Activated CD4-positive, alpha-beta memory T cell treated with anti-CD3 and anti-CD28 coated beads, Interleukin-2, amount 10 ng/mL, durations not matched to agents 7 days and 5 days (primary cell): ENCODE measurements at regions of chr4 and their contacts with region 1.

Region 1: DNA sequence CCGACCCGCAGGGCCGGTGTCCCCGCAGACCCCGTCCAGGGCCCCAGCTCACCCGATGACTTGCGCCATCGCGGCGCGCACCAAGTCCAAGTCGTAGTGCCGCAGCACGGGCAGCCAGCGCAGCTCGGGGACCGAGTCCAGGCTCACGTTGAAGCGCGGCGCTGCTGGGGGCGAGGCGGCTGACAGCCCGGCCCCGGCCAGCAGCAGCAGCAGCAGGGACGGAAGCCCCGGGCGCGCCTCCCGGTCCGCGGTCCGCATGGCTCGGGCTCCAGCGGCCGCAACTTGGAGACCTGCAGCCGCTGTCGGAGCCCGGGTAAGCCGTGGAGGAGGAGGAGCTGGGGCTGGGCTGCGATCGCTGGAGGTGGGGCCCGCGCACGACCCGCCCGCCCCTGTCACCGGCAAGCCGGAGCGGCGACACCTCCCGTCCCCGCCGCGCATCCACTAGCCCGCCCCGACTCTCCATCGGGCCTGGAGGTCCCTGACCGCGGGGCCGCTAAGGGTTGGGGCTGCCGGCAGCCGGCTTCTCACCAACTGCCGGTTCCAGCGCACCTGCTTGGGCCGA is at the start of gene NAAA:
- DNase-seq: peak; percentile 88
- H3K4me3 Mint-ChIP-seq: peak within 1 kb of the TSS; percentile 99
- H3K27ac Mint-ChIP-seq: peak within 1 kb of the TSS; percentile 94
- H3K4me1 Mint-ChIP-seq: peaks cover 32% of the 10 kb centered on the region
- H3K27me3 Mint-ChIP-seq: no peaks in the 10 kb centered on the region
- total RNA-seq, gene NAAA: 38.7 to 39.3 TPM

Region 2: GRCh38 chr4:75841641-75842520 is 98.9 kb before region 1 on chr4:
- CTCF ChIA-PET with region 1: no interaction called
- POLR2A ChIA-PET with region 1: no interaction called
- DNase-seq: no peak
- H3K4me3 Mint-ChIP-seq: no peak overlapping the region
- H3K27ac Mint-ChIP-seq: no peak overlapping the region
- H3K4me1 Mint-ChIP-seq: peaks cover 3% of the 10 kb centered on the region
- H3K27me3 Mint-ChIP-seq: no peaks in the 10 kb centered on the region

Region 3: GRCh38 chr4:75916091-75916661 is 24.6 kb before region 1 on chr4:
- CTCF ChIA-PET with region 1: interaction called, 21 read pairs
- POLR2A ChIA-PET with region 1: interaction called, 20 read pairs
- DNase-seq: peak; percentile 37
- H3K4me3 Mint-ChIP-seq: no peak overlapping the region
- H3K27ac Mint-ChIP-seq: no peak overlapping the region
- H3K4me1 Mint-ChIP-seq: no peaks in the 10 kb centered on the region
- H3K27me3 Mint-ChIP-seq: no peaks in the 10 kb centered on the region

Region 4: GRCh38 chr4:75930152-75930551 is 10.6 kb before region 1 on chr4:
- CTCF ChIA-PET with region 1: interaction called, 6 read pairs
- POLR2A ChIA-PET with region 1: interaction called, 15 read pairs
- DNase-seq: no peak
- H3K4me3 Mint-ChIP-seq: no peak overlapping the region
- H3K27ac Mint-ChIP-seq: no peak overlapping the region
- H3K4me1 Mint-ChIP-seq: no peaks in the 10 kb centered on the region
- H3K27me3 Mint-ChIP-seq: no peaks in the 10 kb centered on the region

Region 5: GRCh38 chr4:75953509-75953908 is 12.7 kb after region 1 on chr4:
- CTCF ChIA-PET with region 1: interaction called, 4 read pairs
- POLR2A ChIA-PET with region 1: interaction called, 26 read pairs
- DNase-seq: no peak
- H3K4me3 Mint-ChIP-seq: no peak overlapping the region
- H3K27ac Mint-ChIP-seq: no peak overlapping the region
- H3K4me1 Mint-ChIP-seq: peaks cover 33% of the 10 kb centered on the region
- H3K27me3 Mint-ChIP-seq: no peaks in the 10 kb centered on the region

Region 6: GRCh38 chr4:75989846-75990528 is 49.2 kb after region 1 on chr4:
- CTCF ChIA-PET with region 1: interaction called, 4 read pairs
- POLR2A ChIA-PET with region 1: interaction called, 25 read pairs
- DNase-seq: no peak
- H3K4me3 Mint-ChIP-seq: peak overlapping the region; percentile 88
- H3K27ac Mint-ChIP-seq: peak overlapping the region; percentile 83
- H3K4me1 Mint-ChIP-seq: peaks cover 37% of the 10 kb centered on the region
- H3K27me3 Mint-ChIP-seq: no peaks in the 10 kb centered on the region

Region 7: DNA sequence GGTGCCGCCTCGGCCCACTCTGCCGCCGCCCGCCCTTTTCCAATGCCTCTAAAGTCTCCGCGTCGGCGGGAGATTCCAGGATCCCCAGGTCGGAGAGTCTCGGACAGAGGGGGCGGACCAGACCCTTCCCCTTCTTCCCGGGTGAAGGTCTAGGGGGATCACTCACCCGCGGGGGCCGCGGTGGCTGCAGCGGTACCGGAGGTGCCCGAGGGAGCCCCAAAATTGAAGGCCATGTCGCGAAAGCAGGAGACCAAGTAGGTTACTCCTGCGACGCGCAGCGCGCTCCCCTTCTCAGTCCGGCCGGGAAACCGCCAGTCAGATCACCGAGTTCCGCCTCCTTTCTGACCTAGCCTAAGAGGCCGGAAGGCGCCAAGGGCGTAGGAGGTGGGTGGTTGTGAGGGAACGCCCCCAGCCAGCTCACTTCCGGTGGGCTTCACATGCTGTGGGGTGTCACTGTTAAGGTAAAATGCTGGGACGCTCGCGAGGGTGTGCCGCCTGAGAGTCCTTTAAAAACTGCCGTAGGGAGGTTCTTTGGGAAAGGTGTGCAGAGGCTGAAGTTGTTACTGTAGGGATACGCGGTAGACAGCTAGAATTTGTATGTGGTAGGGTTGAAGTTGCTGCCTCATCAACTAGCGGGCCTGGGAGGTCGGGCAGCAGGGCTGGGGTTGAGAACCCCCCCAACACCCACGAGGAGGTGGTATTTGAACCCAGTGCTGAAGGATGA is 207.5 kb after region 1 on chr4 and contains the start of gene NUP54:
- CTCF ChIA-PET with region 1: no interaction called
- POLR2A ChIA-PET with region 1: interaction called, 11 read pairs
- DNase-seq: peak; percentile 96
- H3K4me3 Mint-ChIP-seq: peak within 1 kb of the TSS; percentile 89
- H3K27ac Mint-ChIP-seq: peak within 1 kb of the TSS; percentile 81
- H3K4me1 Mint-ChIP-seq: peaks cover 34% of the 10 kb centered on the region
- H3K27me3 Mint-ChIP-seq: no peaks in the 10 kb centered on the region
- total RNA-seq, gene NUP54: 48.9 to 58.6 TPM